ENCODE measurements at regions of chr18 and their contacts with region 1.

Region 1: GRCh38 chr18:39558658-39559057 is 1993.1 kb upstream of the CELF4 start:
- DNase-seq: no peak
- H3K4me3 ChIP-seq: no peak overlapping the region
- H3K27ac ChIP-seq: no peak overlapping the region
- H3K4me1 ChIP-seq: no peaks in the 10 kb centered on the region
- H3K27me3 ChIP-seq: no peaks in the 10 kb centered on the region
- CTCF ChIP-seq: no peak
- POLR2A ChIP-seq: no peak

Region 2: DNA sequence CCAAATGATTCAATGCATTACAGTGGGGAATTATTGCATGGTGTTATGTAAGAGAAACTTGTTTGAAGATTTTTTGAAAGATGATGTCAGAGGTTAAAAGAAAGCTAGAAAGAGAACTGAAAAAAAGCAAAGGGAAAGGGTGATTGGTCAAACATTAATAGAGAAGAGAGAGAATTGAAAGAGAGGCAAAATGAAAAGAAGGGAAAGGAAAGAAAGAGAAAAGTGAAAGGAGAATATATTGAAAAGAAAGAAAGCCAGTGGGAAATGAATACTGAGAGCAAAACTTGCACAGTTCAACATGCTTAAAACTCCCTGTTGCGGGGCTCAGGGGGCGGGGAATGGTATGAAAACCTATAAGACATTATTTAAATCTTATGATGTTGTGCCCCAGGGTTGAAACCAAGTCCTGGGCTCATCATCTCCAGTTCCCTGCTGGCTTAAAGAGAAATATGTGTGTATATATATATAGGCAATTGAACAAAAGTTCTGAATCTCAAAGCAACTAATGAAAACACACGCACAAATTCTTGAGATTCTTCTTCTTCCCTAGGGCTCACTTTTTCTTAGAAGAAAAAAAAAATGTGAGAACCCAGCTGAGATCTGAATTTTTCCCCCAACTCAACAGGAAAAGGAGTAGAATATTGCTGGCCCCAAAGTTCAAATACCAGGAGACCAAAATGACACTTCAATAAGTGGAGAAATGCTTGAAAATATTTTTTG is 52.9 kb after region 1 on chr18:
- intact Hi-C with region 1: loop called (anchors 10 kb)
- DNase-seq: no peak
- H3K4me3 ChIP-seq: no peak overlapping the region
- H3K27ac ChIP-seq: no peak overlapping the region
- H3K4me1 ChIP-seq: no peaks in the 10 kb centered on the region
- H3K27me3 ChIP-seq: no peaks in the 10 kb centered on the region
- CTCF ChIP-seq: no peak
- POLR2A ChIP-seq: no peak